Activated CD4-positive, alpha-beta T cell treated with anti-CD3 and anti-CD28 coated beads, Interleukin-2, amount 10 ng/mL, durations not matched to agents 7 days and 5 days (primary cell): ENCODE measurements at regions of chr20 and their contacts with region 1.

Region 1: GRCh38 chr20:44217342-44218092 is 6.9 kb upstream of the OSER1 start:
- DNase-seq: peak; percentile 84
- H3K4me3 Mint-ChIP-seq: peak overlapping the region; percentile 73
- H3K27ac Mint-ChIP-seq: peak overlapping the region; percentile 95
- H3K4me1 Mint-ChIP-seq: peaks cover 58% of the 10 kb centered on the region
- H3K27me3 Mint-ChIP-seq: no peaks in the 10 kb centered on the region

Region 2: GRCh38 chr20:44228465-44229258 is 11.1 kb after region 1 on chr20:
- CTCF ChIA-PET with region 1: interaction called, 16 read pairs
- POLR2A ChIA-PET with region 1: no interaction called
- DNase-seq: no peak
- H3K4me3 Mint-ChIP-seq: no peak overlapping the region
- H3K27ac Mint-ChIP-seq: no peak overlapping the region
- H3K4me1 Mint-ChIP-seq: peaks cover 4% of the 10 kb centered on the region
- H3K27me3 Mint-ChIP-seq: no peaks in the 10 kb centered on the region

Region 3: GRCh38 chr20:44326391-44327159 is 109.1 kb after region 1 on chr20:
- CTCF ChIA-PET with region 1: interaction called, 10 read pairs
- POLR2A ChIA-PET with region 1: interaction called, 3 read pairs
- DNase-seq: no peak
- H3K4me3 Mint-ChIP-seq: peak overlapping the region; percentile 30
- H3K27ac Mint-ChIP-seq: no peak overlapping the region
- H3K4me1 Mint-ChIP-seq: peaks cover 2% of the 10 kb centered on the region
- H3K27me3 Mint-ChIP-seq: peaks cover 7% of the 10 kb centered on the region